Posterior cingulate gyrus (tissue), 11 donors: ENCODE measurements at regions of chr11 and their contacts with region 1.

Region 1: DNA sequence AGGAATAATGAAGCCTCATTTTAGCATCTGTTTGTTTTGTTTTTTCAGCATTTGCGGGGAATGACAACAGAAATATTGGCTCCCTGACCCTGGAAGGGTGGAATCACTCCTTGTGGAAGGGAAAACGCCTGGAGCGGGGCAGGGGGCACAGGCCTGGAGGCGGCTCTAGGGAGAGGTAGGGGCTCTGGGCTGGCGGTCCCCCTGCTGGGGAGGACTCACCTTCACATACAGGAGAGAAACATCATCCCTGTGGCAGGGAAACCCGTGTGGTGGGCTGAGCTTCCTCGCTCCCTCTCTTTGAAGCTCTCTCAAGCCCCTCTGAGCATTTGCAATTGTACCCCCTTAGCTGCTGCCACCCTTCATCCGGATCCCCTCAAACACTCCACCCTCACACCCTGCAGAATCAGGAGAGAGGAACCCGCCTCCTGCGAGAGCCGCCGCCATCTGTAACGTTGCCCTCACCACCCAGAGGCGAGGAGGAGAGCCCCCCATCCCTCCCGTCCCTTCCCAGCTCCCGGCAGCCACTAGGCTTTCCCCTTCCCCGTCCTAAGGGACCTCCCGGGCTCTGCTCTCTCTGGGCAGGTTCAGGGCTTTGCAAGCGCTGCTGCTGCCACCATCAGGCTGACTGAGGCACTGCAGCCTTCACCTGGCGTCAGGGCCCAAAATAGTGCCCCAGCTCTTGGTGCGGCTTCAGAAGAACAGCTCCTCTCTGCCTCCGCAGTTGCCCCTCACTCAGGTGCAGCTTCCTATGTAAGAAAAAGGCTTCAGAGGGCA is 10.4 kb downstream of the KIRREL3 start:
- DNase-seq: peak; percentile 71 to 98 (median 89)

Region 2: GRCh38 chr11:126440792-126441514 is 549.2 kb before region 1 on chr11:
- intact Hi-C with region 1: loop called (anchors 10 kb)
- DNase-seq: peak; percentile 67 to 97 (median 84)

Region 3: DNA sequence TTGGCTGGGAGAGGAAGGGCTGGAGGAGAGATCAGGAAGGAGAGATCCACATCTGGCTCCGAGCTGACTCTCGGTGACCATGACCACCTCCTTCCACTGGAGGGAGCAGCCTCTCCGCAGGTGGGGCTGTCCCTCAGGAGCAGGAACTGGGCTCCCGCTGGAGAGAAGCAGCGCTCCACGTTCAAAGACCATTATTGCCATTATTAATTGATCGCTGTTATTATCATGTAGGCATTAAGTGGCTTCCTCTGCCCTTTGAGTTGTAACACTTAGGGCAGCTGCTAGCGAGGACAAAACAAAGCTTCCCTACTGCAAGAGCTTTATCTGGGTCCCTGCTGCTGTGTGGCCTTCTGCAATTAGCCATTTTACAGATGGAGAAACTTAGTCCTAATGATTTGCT is 382.8 kb before region 1 on chr11:
- intact Hi-C with region 1: loop called (anchors 2 kb)
- DNase-seq: peak; percentile 48 to 96 (median 76)

Region 4: DNA sequence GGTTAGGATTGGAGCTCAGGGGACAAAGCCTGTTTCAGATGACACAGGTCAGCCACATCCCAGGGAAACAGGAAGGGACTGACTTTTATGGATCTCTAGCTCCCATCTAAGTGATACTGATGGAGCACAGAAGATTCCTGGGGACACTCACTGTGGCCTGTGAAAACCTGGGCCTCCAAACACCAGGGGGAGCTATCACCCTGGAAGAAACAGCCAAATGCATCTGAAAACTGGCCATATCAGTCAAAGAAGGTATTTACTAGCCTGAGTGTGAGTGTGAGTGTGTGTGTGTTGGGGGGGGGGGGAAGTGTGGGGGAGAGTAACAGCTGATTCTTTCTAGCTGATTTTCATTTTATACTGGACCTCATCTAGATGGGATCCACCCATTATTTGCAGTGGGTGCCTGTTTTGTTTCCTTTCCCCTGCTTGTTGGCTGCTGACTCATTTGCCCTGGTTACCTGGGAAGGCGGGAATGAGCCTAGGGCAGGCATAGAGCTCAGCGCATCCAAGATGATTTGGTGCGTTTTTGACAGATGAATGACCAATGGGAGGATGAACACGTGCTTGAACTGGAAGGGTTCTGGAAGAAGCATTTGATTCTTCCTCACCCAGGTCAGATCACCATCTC is 273.6 kb before region 1 on chr11:
- intact Hi-C with region 1: loop called (anchors 2 kb)
- DNase-seq: peak in 6 of 10 donors; percentile 39 to 93 (median 72)

Region 5: DNA sequence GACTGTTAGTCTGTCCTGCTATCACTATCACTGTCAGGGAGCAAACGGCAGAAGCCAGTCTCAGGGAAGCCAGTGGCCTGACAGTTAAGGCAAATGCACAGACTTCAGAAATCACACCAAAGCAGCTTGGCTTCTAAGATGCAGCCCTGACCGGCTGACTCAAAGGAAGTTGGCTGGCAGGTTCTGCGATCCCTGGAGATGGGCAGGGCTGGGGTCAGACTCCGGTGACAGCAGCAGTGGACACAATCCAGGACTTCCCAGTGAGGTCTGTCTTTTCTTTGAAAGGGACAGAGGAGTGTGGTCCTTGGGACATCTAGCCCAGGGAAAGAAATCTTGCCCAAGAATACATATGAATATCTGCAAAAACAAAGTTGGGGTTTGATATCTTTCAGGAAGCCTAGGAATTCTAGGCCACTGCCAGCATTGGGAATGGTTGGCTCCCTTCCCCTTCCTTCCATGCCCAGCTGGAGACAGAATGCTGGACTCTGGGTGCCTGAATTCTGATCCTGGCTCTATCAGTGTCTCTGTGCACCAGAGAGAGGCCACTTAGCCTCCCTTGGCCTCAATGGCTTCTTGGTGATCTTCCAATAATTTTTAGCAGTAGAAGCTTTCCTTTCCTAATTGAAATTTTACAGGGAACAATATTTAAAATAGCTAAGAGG is 98.4 kb before region 1 on chr11:
- intact Hi-C with region 1: loop called (anchors 5 kb)
- DNase-seq: peak in 2 of 10 donors; percentile 18 to 81

Region 6: DNA sequence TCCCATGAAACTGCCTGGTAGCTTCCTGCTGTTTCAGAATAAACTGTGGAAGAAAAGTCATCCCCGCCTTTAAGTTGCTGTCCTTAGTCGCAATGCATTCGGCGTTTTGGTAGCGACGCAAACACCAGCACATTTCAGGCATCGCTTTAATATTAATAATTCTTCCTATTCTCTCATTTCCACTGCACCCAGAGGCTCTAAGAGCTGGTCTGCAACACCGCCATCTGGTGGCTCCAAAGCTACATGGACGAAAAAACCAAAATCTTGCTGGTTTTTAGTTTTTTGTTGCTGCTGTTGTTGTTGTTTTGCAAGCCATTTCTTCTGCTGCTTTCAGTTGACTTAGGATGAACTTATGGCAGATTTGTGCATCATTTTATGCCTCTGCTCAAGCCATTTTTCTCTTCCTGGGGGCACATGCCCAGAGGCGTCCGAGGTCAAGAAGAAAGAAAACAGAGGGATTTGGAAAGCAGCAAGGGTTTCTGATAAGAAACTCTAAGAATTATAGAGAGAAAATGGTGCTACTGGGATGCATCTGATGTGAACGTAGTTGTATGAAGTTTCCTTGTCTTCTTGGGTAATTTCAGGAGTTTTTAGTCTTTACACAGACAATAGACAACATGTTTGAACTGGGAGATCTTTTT is 355.8 kb after region 1 on chr11:
- intact Hi-C with region 1: loop called (anchors 5 kb)
- DNase-seq: peak in 8 of 10 donors; percentile 22 to 85 (median 62)